Activated B cell treated with CpG ODN at 0.5 μM for 24 hours (primary cell): ENCODE measurements at regions of chr17 and their contacts with region 1.

Region 1: DNA sequence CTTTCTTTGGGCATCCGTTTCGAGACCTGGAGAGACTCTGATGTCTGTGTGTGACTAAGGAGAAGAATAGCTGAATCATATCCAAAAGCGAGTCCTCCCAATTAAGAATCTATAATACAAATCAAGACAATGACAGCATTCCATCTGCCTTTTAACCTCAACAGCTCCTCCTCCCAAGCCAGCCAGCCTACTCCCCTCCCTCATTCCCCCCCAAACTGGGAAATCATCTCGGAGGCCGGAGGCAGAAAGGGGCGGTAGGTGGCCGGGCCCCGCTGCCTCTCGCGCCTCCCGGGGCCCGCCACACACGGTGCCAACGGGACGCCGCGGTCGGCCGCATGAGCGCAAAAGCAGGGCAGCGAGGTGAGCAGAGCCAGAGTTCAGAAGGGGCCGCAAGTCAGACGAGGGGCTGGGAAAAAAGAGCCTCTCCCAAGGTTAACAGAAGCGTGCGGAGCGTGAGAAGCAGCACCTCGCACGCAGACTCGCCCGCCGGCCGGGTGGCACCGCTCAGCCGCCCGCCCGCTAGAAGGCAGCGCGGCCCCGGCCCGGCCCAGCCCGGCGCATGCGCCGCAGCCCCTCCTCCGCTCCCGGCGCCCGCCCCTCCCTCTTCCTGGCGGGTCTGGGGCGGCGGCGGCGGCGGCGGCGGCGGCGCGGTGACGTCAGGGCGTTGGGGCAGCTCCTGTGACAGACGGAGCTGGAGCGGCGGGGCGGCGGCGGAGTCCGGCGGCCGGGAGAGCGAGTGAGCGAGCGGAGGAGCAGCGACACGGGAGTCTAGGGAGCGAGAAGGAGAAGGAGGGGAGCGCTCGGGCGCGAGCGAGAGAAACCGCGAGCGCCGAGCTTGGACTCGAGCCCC is at the start of gene PAFAH1B1:
- DNase-seq: peak; percentile 94
- ATAC-seq: peak; percentile 79
- H3K4me3 Mint-ChIP-seq: peak within 1 kb of the TSS; percentile 94
- H3K27ac Mint-ChIP-seq: peak within 1 kb of the TSS; percentile 90
- H3K4me1 Mint-ChIP-seq: peaks cover 32% of the 10 kb centered on the region
- H3K27me3 Mint-ChIP-seq: no peaks in the 10 kb centered on the region
- CTCF ChIP-seq: no peak
- total RNA-seq, gene PAFAH1B1: 134 and 138 TPM in 2 replicates

Region 2: DNA sequence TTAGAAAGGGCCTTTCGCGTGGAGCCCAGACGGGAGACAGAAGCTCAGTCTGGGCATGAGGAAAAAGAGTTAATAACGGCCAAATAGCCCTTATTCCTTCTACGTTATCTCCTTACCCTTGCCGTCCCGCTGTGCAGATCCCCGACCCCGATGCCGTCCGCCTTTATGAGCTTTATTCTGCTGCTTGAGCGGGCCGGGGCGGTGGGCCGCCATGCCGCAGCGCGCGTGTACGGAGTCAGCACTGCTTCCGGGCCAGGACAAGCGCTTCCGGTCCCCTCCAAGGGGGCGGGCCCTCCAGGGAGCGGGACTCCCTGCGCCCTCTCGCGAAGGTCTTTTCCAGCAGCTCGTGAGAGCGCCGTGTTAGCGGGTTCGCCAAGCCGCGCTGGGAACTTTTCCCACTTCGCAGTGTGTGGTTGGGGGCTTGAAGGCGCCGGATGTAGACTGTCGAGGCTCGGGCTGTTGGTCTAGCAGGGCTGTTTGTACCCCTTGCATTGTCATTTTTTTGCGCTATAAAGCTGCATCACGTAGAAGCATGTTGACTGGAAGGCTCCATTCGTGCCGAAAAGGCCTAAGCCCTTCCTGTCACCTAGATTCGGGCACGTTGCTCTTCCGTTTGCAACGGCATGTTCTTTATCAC is 256.9 kb before region 1 on chr17 and contains the start of gene TSR1:
- CTCF ChIA-PET with region 1: no interaction called
- POLR2A ChIA-PET with region 1: no interaction called
- intact Hi-C with region 1: loop called (anchors 1 kb)
- DNase-seq: peak; percentile 85
- ATAC-seq: peak; percentile 79
- H3K4me3 Mint-ChIP-seq: peak within 1 kb of the TSS; percentile 99
- H3K27ac Mint-ChIP-seq: peak within 1 kb of the TSS; percentile 96
- H3K4me1 Mint-ChIP-seq: peaks cover 23% of the 10 kb centered on the region
- H3K27me3 Mint-ChIP-seq: no peaks in the 10 kb centered on the region
- CTCF ChIP-seq: no peak
- total RNA-seq, gene TSR1: 46.4 and 48.5 TPM in 2 replicates

Region 3: GRCh38 chr17:2478458-2478857 is 114.7 kb before region 1 on chr17:
- CTCF ChIA-PET with region 1: no interaction called
- POLR2A ChIA-PET with region 1: interaction called, 10 read pairs
- intact Hi-C with region 1: no loop called
- DNase-seq: no peak
- ATAC-seq: no peak
- H3K4me3 Mint-ChIP-seq: no peak overlapping the region
- H3K27ac Mint-ChIP-seq: no peak overlapping the region
- H3K4me1 Mint-ChIP-seq: peaks cover 22% of the 10 kb centered on the region
- H3K27me3 Mint-ChIP-seq: no peaks in the 10 kb centered on the region
- CTCF ChIP-seq: no peak

Region 4: DNA sequence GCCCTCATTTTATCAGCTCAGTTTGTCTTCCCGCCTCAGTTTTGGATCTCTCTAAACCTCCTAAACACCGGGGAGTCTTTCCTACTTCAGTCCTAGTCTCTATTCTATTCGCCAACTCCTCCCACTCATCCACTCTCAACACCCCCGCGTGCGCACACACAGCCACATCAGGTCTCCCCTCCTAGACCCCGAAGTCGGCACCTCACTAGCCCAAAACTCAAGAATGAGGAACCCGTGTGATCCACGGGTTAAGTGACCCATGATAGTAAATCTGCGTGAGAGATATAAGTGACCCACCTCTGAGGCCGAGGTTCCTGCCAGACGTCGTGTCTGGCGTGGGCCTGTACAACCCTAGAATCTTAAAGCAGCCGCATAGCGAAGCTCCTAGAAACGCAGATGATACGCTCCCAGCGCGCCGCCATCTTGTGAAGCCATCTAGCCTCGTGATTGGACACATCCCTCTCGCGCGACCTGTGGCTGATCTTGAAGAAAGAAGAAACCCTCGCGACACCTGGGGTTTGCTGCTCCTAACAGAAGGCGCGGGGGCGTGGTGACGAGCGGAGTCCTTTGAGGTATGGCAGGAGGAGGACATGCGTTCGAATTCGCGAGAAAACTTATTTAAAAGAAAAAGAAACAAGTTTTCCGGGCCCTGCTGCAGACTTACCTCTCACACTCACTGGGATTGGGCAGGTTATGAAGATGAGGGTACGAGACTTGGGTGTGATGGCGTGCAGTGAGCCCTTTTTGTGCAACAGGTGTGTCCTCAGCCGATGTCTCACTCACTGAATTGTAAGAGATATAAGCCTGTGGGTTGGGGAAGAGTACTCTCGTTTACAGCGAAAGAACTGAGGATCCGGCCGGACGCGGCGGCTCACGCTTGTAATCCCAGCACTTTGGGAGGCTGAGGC is 81.5 kb before region 1 on chr17 and contains the start of gene METTL16:
- CTCF ChIA-PET with region 1: no interaction called
- POLR2A ChIA-PET with region 1: interaction called, 13 read pairs
- intact Hi-C with region 1: loop called (anchors 1 kb)
- DNase-seq: peak; percentile 84
- ATAC-seq: peak; percentile 99
- H3K4me3 Mint-ChIP-seq: no peak within 1 kb of the TSS
- H3K27ac Mint-ChIP-seq: peak within 1 kb of the TSS; percentile 36
- H3K4me1 Mint-ChIP-seq: peaks cover 10% of the 10 kb centered on the region
- H3K27me3 Mint-ChIP-seq: no peaks in the 10 kb centered on the region
- CTCF ChIP-seq: no peak
- total RNA-seq, gene METTL16: 49.4 and 57.2 TPM in 2 replicates

Region 5: GRCh38 chr17:2624292-2624731 is 31.1 kb after region 1 on chr17:
- CTCF ChIA-PET with region 1: no interaction called
- POLR2A ChIA-PET with region 1: interaction called, 3 read pairs
- intact Hi-C with region 1: loop called (anchors 1 kb)
- DNase-seq: no peak
- ATAC-seq: peak; percentile 81
- H3K4me3 Mint-ChIP-seq: peak overlapping the region; percentile 74
- H3K27ac Mint-ChIP-seq: peak overlapping the region; percentile 88
- H3K4me1 Mint-ChIP-seq: peaks cover 74% of the 10 kb centered on the region
- H3K27me3 Mint-ChIP-seq: no peaks in the 10 kb centered on the region
- CTCF ChIP-seq: no peak

Region 6: DNA sequence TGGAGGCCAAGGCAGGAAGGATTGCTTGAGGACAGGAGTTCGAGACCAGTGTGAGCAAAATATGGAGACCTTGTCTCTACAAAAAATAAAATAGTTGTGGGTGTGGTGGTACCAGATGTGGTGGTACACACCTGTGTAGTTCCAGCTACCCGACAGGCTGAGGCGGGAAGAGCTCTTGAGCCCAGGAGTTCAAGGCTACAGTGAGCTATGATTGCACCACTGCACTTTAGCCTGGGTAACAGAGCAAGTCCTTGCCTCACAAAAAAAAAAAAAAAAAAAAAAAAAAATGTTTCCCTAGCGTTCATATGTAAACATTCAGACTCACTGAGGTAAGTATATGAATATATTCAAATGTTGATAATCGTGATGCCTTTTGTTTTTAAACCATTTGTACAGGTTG is 78.8 kb after region 1 on chr17:
- CTCF ChIA-PET with region 1: interaction called, 8 read pairs
- POLR2A ChIA-PET with region 1: interaction called, 3 read pairs
- intact Hi-C with region 1: loop called (anchors 1 kb)
- DNase-seq: no peak
- ATAC-seq: no peak
- H3K4me3 Mint-ChIP-seq: no peak overlapping the region
- H3K27ac Mint-ChIP-seq: no peak overlapping the region
- H3K4me1 Mint-ChIP-seq: peaks cover 2% of the 10 kb centered on the region
- H3K27me3 Mint-ChIP-seq: no peaks in the 10 kb centered on the region
- CTCF ChIP-seq: no peak

Region 7: DNA sequence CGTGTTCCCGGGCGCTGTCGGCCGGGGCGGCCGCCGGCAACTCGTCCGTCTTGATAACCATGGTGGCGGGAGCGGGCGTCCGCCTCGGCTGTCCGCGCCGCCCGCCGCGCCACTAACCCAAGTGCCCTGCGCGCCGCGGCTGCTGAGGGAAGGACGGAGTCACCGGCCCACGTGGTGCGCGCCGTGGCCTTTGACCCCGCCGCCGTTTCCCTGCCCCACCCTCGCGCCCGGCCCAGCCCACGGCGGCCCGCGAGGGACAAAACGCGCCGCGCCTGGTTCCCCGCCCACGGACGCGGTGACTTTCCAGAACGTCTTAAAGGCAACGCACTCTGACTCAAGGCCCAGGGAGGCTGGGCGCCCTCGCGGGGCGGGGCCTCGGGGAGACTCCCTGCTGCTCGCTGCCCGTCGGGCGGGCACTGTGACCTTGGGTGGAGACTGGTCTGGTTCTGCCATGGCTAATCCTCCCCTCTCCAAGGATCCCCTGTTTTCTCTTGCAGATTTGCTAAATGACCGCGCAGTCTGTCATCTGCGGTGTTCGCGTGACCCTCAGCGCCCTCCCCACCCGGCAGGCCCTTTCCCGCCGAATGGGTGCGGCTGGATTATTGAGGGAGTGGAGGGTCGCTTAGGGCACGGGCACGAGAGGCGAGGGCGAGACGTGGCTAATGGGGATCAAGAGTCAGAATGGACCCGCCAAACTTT is 118.6 kb after region 1 on chr17 and contains the start of gene CLUH:
- CTCF ChIA-PET with region 1: no interaction called
- POLR2A ChIA-PET with region 1: no interaction called
- intact Hi-C with region 1: loop called (anchors 1 kb)
- DNase-seq: peak; percentile 96
- ATAC-seq: peak; percentile 83
- H3K4me3 Mint-ChIP-seq: peak within 1 kb of the TSS; percentile 90
- H3K27ac Mint-ChIP-seq: peak within 1 kb of the TSS; percentile 83
- H3K4me1 Mint-ChIP-seq: peaks cover 37% of the 10 kb centered on the region
- H3K27me3 Mint-ChIP-seq: no peaks in the 10 kb centered on the region
- CTCF ChIP-seq: no peak
- total RNA-seq, gene CLUH: 101 and 115 TPM in 2 replicates